ENCODE measurements at regions of chr16 and their contacts with region 1.

Region 1: DNA sequence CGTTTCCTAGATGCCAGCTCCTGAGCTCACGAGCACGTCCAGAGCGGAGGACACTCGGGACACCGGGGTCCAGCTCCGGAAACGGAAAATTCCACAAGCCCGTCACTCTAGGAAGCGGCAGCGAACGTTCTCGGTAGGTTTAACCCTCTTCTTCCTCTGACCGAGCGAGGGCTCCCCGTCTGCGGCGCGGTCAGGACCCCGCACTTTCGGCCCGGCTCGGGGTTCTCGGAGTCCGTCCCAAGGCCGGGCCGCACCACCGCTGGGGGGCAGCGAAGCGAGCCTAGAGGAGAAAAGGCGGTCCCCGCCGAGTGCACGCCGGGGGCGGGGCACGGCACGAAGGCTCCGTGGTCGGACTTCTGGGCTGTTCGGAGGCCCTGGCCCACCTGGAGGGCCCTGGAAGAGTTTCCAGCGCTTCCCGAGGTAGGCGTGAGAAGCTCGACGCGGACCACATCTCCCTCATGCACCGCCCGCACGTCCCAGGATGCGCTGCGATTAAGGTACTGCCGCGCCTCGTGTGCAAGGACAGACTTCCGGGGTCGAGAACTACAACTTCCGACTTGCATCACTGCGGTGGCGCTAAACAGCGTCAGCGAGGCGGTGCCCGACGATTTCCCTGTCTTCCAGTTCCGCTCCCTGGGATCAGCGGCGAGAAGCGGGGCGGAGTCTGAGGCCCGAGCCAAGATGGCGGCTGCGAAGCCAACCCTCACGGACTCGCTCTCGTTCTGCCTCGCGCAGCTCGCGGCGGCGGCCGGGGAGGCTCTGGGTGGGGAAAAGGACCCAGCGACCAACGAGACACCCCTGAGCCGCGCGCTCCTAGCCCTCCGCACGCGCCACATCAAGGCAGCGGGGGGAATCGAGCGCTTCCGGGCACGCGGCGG is at the start of gene ARMC5:
- DNase-seq: peak; percentile 98
- H3K4me3 ChIP-seq: peak within 1 kb of the TSS; percentile 82
- CTCF ChIP-seq: peak; percentile 53

Region 2: GRCh38 chr16:31196324-31197088 is 262.6 kb before region 1 on chr16:
- in situ Hi-C with region 1: loop called (anchors 10 kb)
- DNase-seq: no peak
- H3K4me3 ChIP-seq: no peak overlapping the region
- CTCF ChIP-seq: no peak

Region 3: GRCh38 chr16:31529398-31530312 is 70.6 kb after region 1 on chr16:
- in situ Hi-C with region 1: no loop called
- DNase-seq: no peak
- H3K4me3 ChIP-seq: peak overlapping the region; percentile 31
- CTCF ChIP-seq: no peak

Region 4: GRCh38 chr16:31542763-31543162 is 83.7 kb after region 1 on chr16:
- in situ Hi-C with region 1: no loop called
- DNase-seq: no peak
- H3K4me3 ChIP-seq: no peak overlapping the region
- CTCF ChIP-seq: no peak